ENCODE measurements at regions of chr11 and their contacts with region 1.

Region 1: GRCh38 chr11:130131961-130132850 is 27.4 kb upstream of the ST14 start:
- DNase-seq: peak; percentile 53 to 62
- H3K4me3 ChIP-seq: no peak overlapping the region
- H3K4me1 ChIP-seq: no peaks in the 10 kb centered on the region
- H3K27me3 ChIP-seq: no peaks in the 10 kb centered on the region

Region 2: DNA sequence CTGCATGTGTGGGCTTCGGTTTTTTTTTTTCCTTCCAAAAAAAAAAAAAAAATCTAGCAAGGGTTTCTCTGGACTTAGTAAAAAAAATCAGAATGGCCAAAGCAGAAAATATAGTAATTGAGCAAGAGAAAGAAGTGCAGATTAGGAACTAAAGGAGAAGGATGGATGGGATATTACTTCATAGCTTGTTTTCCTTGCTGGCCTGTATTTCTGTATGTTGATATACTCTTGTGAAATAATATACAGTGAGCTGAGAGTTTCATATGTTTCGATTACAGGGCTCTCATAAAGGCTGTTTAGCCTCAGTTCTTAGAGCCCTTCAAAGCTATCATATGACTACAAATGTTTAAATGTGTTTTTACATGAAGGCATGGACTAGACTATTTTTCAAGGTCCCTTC is 202.5 kb before region 1 on chr11:
- in situ Hi-C with region 1: loop called (anchors 5 kb)
- DNase-seq: no peak
- H3K4me3 ChIP-seq: no peak overlapping the region
- H3K4me1 ChIP-seq: no peaks in the 10 kb centered on the region
- H3K27me3 ChIP-seq: no peaks in the 10 kb centered on the region

Region 3: GRCh38 chr11:130050257-130050656 is 81.9 kb before region 1 on chr11:
- in situ Hi-C with region 1: no loop called
- DNase-seq: no peak
- H3K4me3 ChIP-seq: no peak overlapping the region
- H3K4me1 ChIP-seq: no peaks in the 10 kb centered on the region
- H3K27me3 ChIP-seq: no peaks in the 10 kb centered on the region

Region 4: GRCh38 chr11:130644187-130644586 is 512.0 kb after region 1 on chr11:
- in situ Hi-C with region 1: no loop called
- DNase-seq: no peak
- H3K4me3 ChIP-seq: no peak overlapping the region
- H3K4me1 ChIP-seq: no peaks in the 10 kb centered on the region
- H3K27me3 ChIP-seq: no peaks in the 10 kb centered on the region